ENCODE measurements at regions of chr17 and their contacts with region 1.

Region 1: GRCh38 chr17:76816590-76817135 is 51.5 kb upstream of the MGAT5B start:
- DNase-seq: peak; percentile 94
- H3K4me3 ChIP-seq: no peak overlapping the region
- H3K27ac ChIP-seq: peak overlapping the region; percentile 31
- H3K4me1 ChIP-seq: peaks cover 41% of the 10 kb centered on the region
- CTCF ChIP-seq: peak; percentile 100

Region 2: GRCh38 chr17:76843703-76844484 is 27.2 kb after region 1 on chr17:
- CTCF ChIA-PET with region 1: interaction called, 3 read pairs
- POLR2A ChIA-PET with region 1: interaction called, 3 read pairs
- intact Hi-C with region 1: loop called (anchors 1 kb)
- DNase-seq: peak; percentile 92
- H3K4me3 ChIP-seq: peak overlapping the region; percentile 29
- H3K27ac ChIP-seq: peak overlapping the region; percentile 93
- H3K4me1 ChIP-seq: peaks cover 99% of the 10 kb centered on the region
- CTCF ChIP-seq: peak; percentile 72

Region 3: DNA sequence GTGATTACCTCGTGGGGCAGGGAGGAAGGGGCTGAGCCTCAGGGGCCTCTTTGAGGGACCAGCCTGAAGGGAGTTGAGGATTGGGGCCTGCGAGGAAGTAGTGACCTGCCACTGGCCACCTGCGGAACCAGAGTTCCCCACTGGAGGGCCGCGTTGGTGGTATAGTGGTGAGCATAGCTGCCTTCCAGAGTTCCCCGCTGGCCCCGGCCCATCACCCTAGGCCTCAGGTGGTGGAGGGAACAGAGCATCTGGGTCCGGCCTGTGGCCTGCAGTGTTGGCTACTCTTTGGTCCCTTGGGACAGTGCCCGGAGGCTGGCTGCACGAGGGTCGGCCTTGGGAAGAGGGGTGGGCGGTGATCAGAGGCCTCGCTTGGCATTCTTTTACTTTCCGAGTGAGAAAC is 72.0 kb after region 1 on chr17:
- CTCF ChIA-PET with region 1: no interaction called
- POLR2A ChIA-PET with region 1: no interaction called
- intact Hi-C with region 1: loop called (anchors 5 kb)
- DNase-seq: no peak
- H3K4me3 ChIP-seq: no peak overlapping the region
- H3K27ac ChIP-seq: no peak overlapping the region
- H3K4me1 ChIP-seq: no peaks in the 10 kb centered on the region
- CTCF ChIP-seq: no peak

Region 4: GRCh38 chr17:77011173-77012011 is 194.7 kb after region 1 on chr17:
- CTCF ChIA-PET with region 1: no interaction called
- POLR2A ChIA-PET with region 1: no interaction called
- intact Hi-C with region 1: loop called (anchors 5 kb)
- DNase-seq: peak; percentile 85
- H3K4me3 ChIP-seq: no peak overlapping the region
- H3K27ac ChIP-seq: no peak overlapping the region
- H3K4me1 ChIP-seq: peaks cover 12% of the 10 kb centered on the region
- CTCF ChIP-seq: peak; percentile 100

Region 5: DNA sequence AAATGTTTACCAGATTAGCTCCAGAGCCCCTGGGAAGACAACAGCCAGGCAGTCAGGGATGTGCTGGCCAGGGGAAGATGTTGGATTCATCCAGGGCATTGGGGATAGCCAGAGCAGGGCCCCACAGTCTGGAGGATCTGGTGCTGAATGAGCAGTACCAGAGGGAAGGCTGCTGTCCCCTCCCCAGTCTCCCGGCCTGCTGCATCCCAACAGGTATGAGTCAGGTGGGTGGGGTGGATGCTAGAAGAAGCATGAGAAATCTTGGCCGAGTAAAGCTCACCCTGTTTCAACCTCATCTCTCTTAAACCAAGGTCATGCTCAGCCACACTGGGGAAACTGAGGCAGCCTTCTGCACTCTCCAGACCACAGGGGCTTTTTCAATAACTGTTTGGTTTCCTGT is 252.3 kb after region 1 on chr17:
- CTCF ChIA-PET with region 1: no interaction called
- POLR2A ChIA-PET with region 1: interaction called, 3 read pairs
- intact Hi-C with region 1: loop called (anchors 2 kb)
- DNase-seq: no peak
- H3K4me3 ChIP-seq: no peak overlapping the region
- H3K27ac ChIP-seq: no peak overlapping the region
- H3K4me1 ChIP-seq: no peaks in the 10 kb centered on the region
- CTCF ChIP-seq: no peak

Measured in OCI-LY7 (cell line).